ENCODE measurements at regions of chr2 and their contacts with region 1.

Region 1: GRCh38 chr2:215711471-215712034 is 275.7 kb upstream of the FN1 start:
- DNase-seq: peak; percentile 78
- ATAC-seq: peak; percentile 31; the same call in 1 of the 2 replicates
- H3K4me3 ChIP-seq: no peak overlapping the region
- H3K27ac ChIP-seq: peak overlapping the region; percentile 21; the same call in 1 of the 2 replicates
- H3K4me1 ChIP-seq: peaks cover 26% of the 10 kb centered on the region
- H3K27me3 ChIP-seq: no peaks in the 10 kb centered on the region
- CTCF ChIP-seq: no peak
- POLR2A ChIP-seq: no peak
- RAD21 ChIP-seq: no peak

Region 2: GRCh38 chr2:215454519-215455246 is 256.9 kb before region 1 on chr2:
- CTCF ChIA-PET with region 1: no interaction called
- POLR2A ChIA-PET with region 1: no interaction called
- dilution Hi-C with region 1: no loop called
- in situ Hi-C with region 1: no loop called
- intact Hi-C with region 1: loop called (anchors 5 kb)
- DNase-seq: no peak
- ATAC-seq: peak; percentile 66
- H3K4me3 ChIP-seq: no peak overlapping the region
- H3K27ac ChIP-seq: no peak overlapping the region
- H3K4me1 ChIP-seq: no peaks in the 10 kb centered on the region
- H3K27me3 ChIP-seq: no peaks in the 10 kb centered on the region
- CTCF ChIP-seq: peak; percentile 75
- POLR2A ChIP-seq: no peak
- RAD21 ChIP-seq: peak; percentile 75

Region 3: GRCh38 chr2:215828517-215829184 is 117.1 kb after region 1 on chr2:
- CTCF ChIA-PET with region 1: no interaction called
- POLR2A ChIA-PET with region 1: no interaction called
- dilution Hi-C with region 1: no loop called
- in situ Hi-C with region 1: no loop called
- intact Hi-C with region 1: loop called (anchors 5 kb)
- DNase-seq: peak; percentile 62
- ATAC-seq: peak; percentile 30
- H3K4me3 ChIP-seq: no peak overlapping the region
- H3K27ac ChIP-seq: no peak overlapping the region
- H3K4me1 ChIP-seq: peaks cover 11% of the 10 kb centered on the region
- H3K27me3 ChIP-seq: no peaks in the 10 kb centered on the region
- CTCF ChIP-seq: peak; percentile 58
- POLR2A ChIP-seq: no peak
- RAD21 ChIP-seq: peak; percentile 62

Region 4: GRCh38 chr2:215961981-215962380 is 250.4 kb after region 1 on chr2:
- CTCF ChIA-PET with region 1: no interaction called
- POLR2A ChIA-PET with region 1: no interaction called
- dilution Hi-C with region 1: no loop called
- in situ Hi-C with region 1: no loop called
- intact Hi-C with region 1: no loop called
- DNase-seq: no peak
- ATAC-seq: no peak; the same call in 1 of the 2 replicates
- H3K4me3 ChIP-seq: no peak overlapping the region
- H3K27ac ChIP-seq: no peak overlapping the region
- H3K4me1 ChIP-seq: no peaks in the 10 kb centered on the region
- H3K27me3 ChIP-seq: no peaks in the 10 kb centered on the region
- CTCF ChIP-seq: no peak
- POLR2A ChIP-seq: no peak
- RAD21 ChIP-seq: no peak